Left lung (tissue), 14 donors: ENCODE measurements at regions of chr14 and their contacts with region 1.

Region 1: DNA sequence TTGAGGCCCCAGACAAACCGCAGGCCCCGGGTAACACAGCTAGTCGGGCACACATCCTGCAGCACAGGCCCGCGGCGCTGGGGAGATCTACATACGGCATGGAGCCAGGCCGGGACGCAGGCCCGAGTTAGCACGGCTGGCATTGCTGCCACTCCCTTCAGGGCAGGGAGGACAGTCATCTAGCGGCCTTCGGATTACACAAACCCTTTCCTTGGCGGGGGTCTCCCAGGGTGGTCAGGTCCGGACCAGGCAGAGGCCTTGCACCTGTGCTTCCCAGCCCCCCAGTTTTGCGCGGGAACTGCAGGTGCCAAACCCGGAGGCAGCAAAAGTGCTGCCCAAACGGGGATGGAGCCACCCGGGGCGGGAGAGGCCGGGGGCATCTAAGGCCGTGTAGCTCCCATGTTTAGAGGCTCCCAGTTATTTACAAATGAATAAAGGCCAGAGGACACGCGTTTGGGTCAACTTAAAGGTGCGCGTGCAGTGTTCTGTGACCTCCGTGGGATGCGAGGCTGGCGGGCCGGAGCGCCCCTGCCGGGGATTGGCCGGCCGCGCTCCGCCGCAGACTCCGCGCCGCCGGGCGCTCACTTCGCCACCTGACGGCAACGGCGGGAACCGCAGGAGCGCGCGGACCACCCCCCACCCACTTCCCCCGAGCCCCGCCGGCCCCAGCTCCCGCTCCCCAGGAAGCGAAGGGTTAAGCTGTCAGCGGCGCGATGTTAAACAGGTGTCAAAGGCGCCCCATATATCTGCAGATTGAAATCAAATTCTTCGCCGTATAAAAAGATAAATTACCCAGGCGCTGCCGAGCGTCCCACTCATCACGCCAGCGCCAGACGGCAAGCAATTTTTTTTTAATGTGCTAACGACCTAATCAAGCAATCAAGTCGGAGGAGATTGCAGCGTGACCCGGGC is 18.1 kb downstream of the VSX2 start:
- DNase-seq: peak in 3 of 4 donors; percentile 41 to 89 (median 45)
- ATAC-seq: peak; percentile 98
- H3K4me3 ChIP-seq: peak overlapping the region; percentile 46 to 48
- H3K27ac ChIP-seq: no peak overlapping the region
- H3K4me1 ChIP-seq: peaks cover 0 to 16% of the 10 kb centered on the region in 2 donors
- H3K27me3 ChIP-seq: peaks cover 7 to 50% of the 10 kb centered on the region in 2 donors
- CTCF ChIP-seq: peak; percentile 96 to 99

Region 2: DNA sequence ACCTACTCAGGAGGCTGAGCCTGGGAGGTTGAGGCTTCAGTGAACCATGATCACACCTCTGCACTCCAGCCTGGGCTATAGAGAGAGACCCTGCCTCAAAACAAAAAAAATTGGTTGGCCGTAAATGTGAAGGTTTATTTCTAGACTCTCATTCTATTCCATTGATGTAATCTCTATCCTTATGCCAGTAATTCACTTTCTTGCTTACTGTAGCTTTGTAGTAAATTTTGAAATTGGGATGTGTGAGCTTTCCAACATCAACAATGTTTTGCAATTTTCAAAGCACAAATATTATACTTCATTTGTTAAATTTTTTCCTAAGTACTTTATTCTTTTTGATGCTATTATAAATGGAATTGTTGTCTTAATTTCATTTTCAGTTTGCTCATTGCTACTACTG is 148.0 kb before region 1 on chr14:
- intact Hi-C with region 1: loop called in 1 of 2 experiments (anchors 5 kb)
- DNase-seq: no peak
- ATAC-seq: no peak
- H3K4me3 ChIP-seq: no peak overlapping the region
- H3K27ac ChIP-seq: no peak overlapping the region
- H3K4me1 ChIP-seq: no peaks in the 10 kb centered on the region
- H3K27me3 ChIP-seq: no peaks in the 10 kb centered on the region
- CTCF ChIP-seq: no peak

Region 3: GRCh38 chr14:74140374-74140850 is 116.9 kb before region 1 on chr14:
- intact Hi-C with region 1: no loop called
- DNase-seq: peak in 2 of 4 donors; percentile 18 to 82
- ATAC-seq: peak; percentile 85
- H3K4me3 ChIP-seq: no peak overlapping the region
- H3K27ac ChIP-seq: peak overlapping the region; percentile 6 to 52
- H3K4me1 ChIP-seq: peaks cover 4 to 24% of the 10 kb centered on the region in 2 donors
- H3K27me3 ChIP-seq: no peaks in the 10 kb centered on the region
- CTCF ChIP-seq: no peak